ENCODE measurements at regions of chr4 and their contacts with region 1.

Region 1: GRCh38 chr4:99949034-99949998 is 759 bp downstream of the H2AZ1 start:
- DNase-seq: peak; percentile 80
- H3K4me3 ChIP-seq: peak overlapping the region; percentile 76 to 78
- H3K27ac ChIP-seq: peak overlapping the region; percentile 80 to 97
- H3K4me1 ChIP-seq: peaks cover 24% of the 10 kb centered on the region in 2 experiments
- H3K27me3 ChIP-seq: no peaks in the 10 kb centered on the region
- CTCF ChIP-seq: peak; percentile 86
- EP300 ChIP-seq: no peak
- RAD21 ChIP-seq: peak; percentile 81

Region 2: DNA sequence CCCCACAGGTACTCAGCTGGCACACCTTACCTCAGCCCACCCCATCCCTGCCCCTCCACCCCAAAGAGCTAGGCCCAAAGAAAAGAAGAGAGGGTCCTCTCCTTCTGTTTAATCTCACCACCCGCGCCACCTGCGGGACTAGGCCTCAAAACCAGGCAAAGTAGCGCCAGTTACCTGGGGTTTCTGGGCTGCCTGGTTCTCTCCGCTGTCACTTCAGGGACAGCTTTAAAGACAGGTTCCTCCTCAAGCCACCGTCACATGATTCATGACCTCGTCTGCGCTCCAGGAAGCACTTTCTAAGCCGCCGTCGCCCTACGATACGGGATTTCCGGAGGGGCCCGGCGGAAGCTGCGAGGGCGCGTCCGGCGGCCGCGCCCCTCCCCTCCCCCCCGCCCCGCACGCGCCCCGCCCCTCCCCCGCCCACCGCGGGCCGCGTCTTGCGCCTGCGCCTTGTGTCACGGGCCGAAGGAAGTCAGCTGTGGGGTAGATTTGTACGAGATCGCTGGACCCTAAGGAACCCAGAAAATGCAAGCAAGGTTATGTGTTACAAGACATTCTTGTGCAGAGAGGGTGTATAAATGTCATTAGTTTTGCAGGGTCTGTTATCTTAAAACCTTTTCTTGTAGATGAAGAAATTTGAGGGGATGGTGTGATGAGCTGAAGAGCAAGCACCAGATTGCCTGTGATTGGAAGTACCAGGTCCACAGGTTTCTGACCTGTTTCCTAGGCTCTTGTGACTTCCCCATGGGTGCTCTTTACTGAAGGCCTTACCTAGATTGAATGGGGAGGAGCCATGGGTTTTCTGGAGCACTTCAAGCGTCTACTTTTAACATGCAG is 54.9 kb before region 1 on chr4 and contains the start of gene LAMTOR3:
- CTCF ChIA-PET with region 1: interaction called, 18 read pairs
- POLR2A ChIA-PET with region 1: interaction called, 16 read pairs
- DNase-seq: peak; percentile 96
- H3K4me3 ChIP-seq: peak within 1 kb of the TSS; percentile 95 to 98
- H3K27ac ChIP-seq: peak within 1 kb of the TSS; percentile 66 to 87
- H3K4me1 ChIP-seq: no peaks in the 10 kb centered on the region; a peak in 2 of 4 replicates
- H3K27me3 ChIP-seq: no peaks in the 10 kb centered on the region
- CTCF ChIP-seq: no peak
- EP300 ChIP-seq: no peak
- RAD21 ChIP-seq: no peak
- polyA plus RNA-seq, gene LAMTOR3: 20.8 and 29.7 TPM in 2 replicates

Region 3: GRCh38 chr4:99921174-99921573 is 28.1 kb before region 1 on chr4:
- CTCF ChIA-PET with region 1: no interaction called
- POLR2A ChIA-PET with region 1: no interaction called
- DNase-seq: no peak
- H3K4me3 ChIP-seq: no peak overlapping the region
- H3K27ac ChIP-seq: no peak overlapping the region
- H3K4me1 ChIP-seq: no peaks in the 10 kb centered on the region
- H3K27me3 ChIP-seq: no peaks in the 10 kb centered on the region
- CTCF ChIP-seq: no peak
- EP300 ChIP-seq: no peak
- RAD21 ChIP-seq: no peak

Region 4: GRCh38 chr4:99938243-99938753 is 11.0 kb before region 1 on chr4:
- CTCF ChIA-PET with region 1: interaction called, 11 read pairs
- POLR2A ChIA-PET with region 1: interaction called, 4 read pairs
- DNase-seq: peak; percentile 39
- H3K4me3 ChIP-seq: no peak overlapping the region
- H3K27ac ChIP-seq: peak overlapping the region in 1 of 2 experiments; percentile 40; a peak in 2 of 4 replicates
- H3K4me1 ChIP-seq: no peaks in the 10 kb centered on the region; a peak in 1 of 4 replicates
- H3K27me3 ChIP-seq: no peaks in the 10 kb centered on the region
- CTCF ChIP-seq: no peak
- EP300 ChIP-seq: peak in 1 of 2 experiments; percentile 30; a peak in 1 of 4 replicates
- RAD21 ChIP-seq: no peak

Region 5: GRCh38 chr4:99968330-99968729 is 19.0 kb after region 1 on chr4:
- CTCF ChIA-PET with region 1: no interaction called
- POLR2A ChIA-PET with region 1: no interaction called
- DNase-seq: no peak
- H3K4me3 ChIP-seq: no peak overlapping the region
- H3K27ac ChIP-seq: peak overlapping the region in 1 of 2 experiments; percentile 64; a peak in 2 of 4 replicates
- H3K4me1 ChIP-seq: peaks cover 0 to 14% of the 10 kb centered on the region in 2 experiments; a peak in 1 of 4 replicates
- H3K27me3 ChIP-seq: no peaks in the 10 kb centered on the region
- CTCF ChIP-seq: no peak
- EP300 ChIP-seq: no peak
- RAD21 ChIP-seq: no peak